Colonic mucosa (tissue), 4 donors: ENCODE measurements at regions of chrX and their contacts with region 1.

Region 1: DNA sequence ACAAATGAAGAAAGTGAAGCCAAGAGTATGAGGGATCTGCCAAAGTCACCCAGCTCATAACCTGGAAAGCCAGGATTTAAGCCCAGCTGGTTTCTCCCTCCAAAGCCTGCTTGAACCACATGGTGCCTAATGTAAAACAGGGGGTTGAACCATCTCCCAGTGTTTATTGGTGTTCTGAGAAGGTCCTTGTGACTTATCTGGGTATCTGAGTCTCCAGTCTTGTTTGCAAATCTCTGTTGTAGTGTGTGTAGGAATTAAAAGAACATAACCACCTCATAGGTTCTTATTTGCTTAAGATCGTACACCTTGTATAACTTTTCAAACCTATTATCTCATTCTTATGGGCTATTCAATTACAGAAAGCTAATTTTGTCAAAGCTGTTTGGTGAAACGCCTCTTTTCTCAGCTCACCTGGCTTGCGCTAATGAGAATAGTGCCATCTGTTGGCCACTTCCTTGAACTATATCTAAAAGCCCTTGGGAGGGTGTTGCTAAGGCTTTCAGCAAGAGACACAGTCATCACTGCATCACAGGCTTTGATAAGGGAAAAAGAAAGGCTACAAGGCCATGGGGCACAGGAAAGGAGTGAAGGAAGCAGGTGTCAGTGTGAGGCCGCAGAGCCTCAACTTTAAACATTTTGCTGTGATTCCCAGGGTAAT is 34.0 kb downstream of the ETDB start:
- DNase-seq: peak; percentile 37
- H3K4me3 ChIP-seq: no peak overlapping the region
- H3K27ac ChIP-seq: no peak overlapping the region
- H3K4me1 ChIP-seq: no peaks in the 10 kb centered on the region
- H3K27me3 ChIP-seq: no peaks in the 10 kb centered on the region
- CTCF ChIP-seq: peak; percentile 66

Region 2: GRCh38 chrX:134969726-134970125 is 116.6 kb before region 1 on chrX:
- intact Hi-C with region 1: loop called (anchors 5 kb)
- DNase-seq: no peak
- H3K4me3 ChIP-seq: no peak overlapping the region
- H3K27ac ChIP-seq: no peak overlapping the region
- H3K4me1 ChIP-seq: no peaks in the 10 kb centered on the region
- H3K27me3 ChIP-seq: no peaks in the 10 kb centered on the region
- CTCF ChIP-seq: no peak

Region 3: GRCh38 chrX:135264211-135264610 is 177.9 kb after region 1 on chrX:
- intact Hi-C with region 1: no loop called
- DNase-seq: no peak
- H3K4me3 ChIP-seq: no peak overlapping the region
- H3K27ac ChIP-seq: no peak overlapping the region
- H3K4me1 ChIP-seq: no peaks in the 10 kb centered on the region
- H3K27me3 ChIP-seq: no peaks in the 10 kb centered on the region
- CTCF ChIP-seq: no peak